IMR-90 (cell line): ENCODE measurements at regions of chr12 and their contacts with region 1.

Region 1: GRCh38 chr12:5428332-5429221 is 3.3 kb upstream of the NTF3 start:
- DNase-seq: peak; percentile 75
- ATAC-seq: peak; percentile 18; the same call in 1 of the 2 replicates
- H3K4me3 ChIP-seq: no peak overlapping the region; the same call in 1 of the 2 replicates
- H3K27ac ChIP-seq: no peak overlapping the region
- H3K4me1 ChIP-seq: peaks cover 9% of the 10 kb centered on the region
- H3K27me3 ChIP-seq: no peaks in the 10 kb centered on the region
- CTCF ChIP-seq: peak; percentile 89
- POLR2A ChIP-seq: 0 out of 2 replicates have a peak, but pooled peaks have one; percentile 35
- RAD21 ChIP-seq: peak; percentile 93

Region 2: GRCh38 chr12:4261655-4262054 is 1166.9 kb before region 1 on chr12:
- CTCF ChIA-PET with region 1: no interaction called
- POLR2A ChIA-PET with region 1: no interaction called
- dilution Hi-C with region 1: no loop called
- in situ Hi-C with region 1: no loop called
- intact Hi-C with region 1: no loop called
- DNase-seq: no peak
- ATAC-seq: no peak
- H3K4me3 ChIP-seq: no peak overlapping the region
- H3K27ac ChIP-seq: no peak overlapping the region
- H3K4me1 ChIP-seq: no peaks in the 10 kb centered on the region
- H3K27me3 ChIP-seq: peaks cover 30% of the 10 kb centered on the region
- CTCF ChIP-seq: no peak
- POLR2A ChIP-seq: no peak
- RAD21 ChIP-seq: no peak

Region 3: GRCh38 chr12:5096241-5096935 is 332.2 kb before region 1 on chr12:
- CTCF ChIA-PET with region 1: interaction called, 3 read pairs
- POLR2A ChIA-PET with region 1: no interaction called
- dilution Hi-C with region 1: no loop called
- in situ Hi-C with region 1: no loop called
- intact Hi-C with region 1: loop called (anchors 2 kb)
- DNase-seq: peak; percentile 92
- ATAC-seq: peak; percentile 87
- H3K4me3 ChIP-seq: no peak overlapping the region
- H3K27ac ChIP-seq: peak overlapping the region; percentile 8; the same call in 1 of the 2 replicates
- H3K4me1 ChIP-seq: peaks cover 21% of the 10 kb centered on the region
- H3K27me3 ChIP-seq: no peaks in the 10 kb centered on the region
- CTCF ChIP-seq: peak; percentile 53
- POLR2A ChIP-seq: no peak
- RAD21 ChIP-seq: peak; percentile 68

Region 4: DNA sequence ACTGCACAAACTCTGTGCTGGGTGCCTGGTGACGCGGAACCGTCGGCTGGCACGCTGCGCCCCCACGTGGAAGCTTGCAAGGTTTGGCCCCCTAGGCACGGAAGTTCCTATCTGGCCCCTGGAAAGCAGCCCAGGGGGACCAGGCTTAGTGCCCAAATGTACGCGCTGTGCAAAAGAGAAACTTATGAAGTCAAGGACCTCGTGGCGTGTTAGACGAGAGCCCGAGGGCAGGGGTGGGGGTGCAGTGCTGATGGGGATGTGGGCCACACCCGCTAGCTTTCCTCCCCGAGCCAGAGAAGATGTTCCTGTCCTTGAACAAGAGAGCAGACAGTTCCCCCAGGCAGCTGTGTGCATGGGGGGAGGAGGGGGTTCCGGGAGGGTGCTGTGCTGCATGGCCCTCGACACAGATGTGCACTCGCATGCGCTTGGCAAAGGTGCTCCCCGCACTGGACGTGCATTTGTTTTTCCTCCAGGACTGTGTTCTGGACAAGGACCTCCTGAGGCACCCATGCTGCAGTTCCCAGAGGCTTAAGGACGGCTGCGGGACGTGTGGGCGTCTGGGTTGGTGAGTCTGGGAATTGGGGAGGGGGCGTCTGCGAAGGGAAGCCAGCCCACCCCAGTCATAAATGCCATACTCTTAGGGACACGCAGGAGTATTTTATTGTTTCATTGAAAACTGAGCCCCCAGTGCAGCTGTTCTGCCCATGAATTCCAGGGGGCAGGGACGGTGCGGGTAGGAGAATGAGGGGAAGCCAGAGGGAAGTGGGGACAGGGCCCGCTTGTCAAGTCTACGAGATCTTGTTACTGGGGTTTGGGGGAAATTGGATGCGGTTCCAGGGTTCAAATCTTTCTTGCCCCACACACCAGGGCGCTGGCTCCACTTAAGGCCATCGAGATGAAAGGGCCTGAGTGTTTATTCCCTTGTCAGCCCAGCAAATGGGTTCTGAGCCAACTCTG is 83.3 kb after region 1 on chr12:
- CTCF ChIA-PET with region 1: interaction called, 5 read pairs
- POLR2A ChIA-PET with region 1: no interaction called
- dilution Hi-C with region 1: no loop called
- in situ Hi-C with region 1: no loop called
- intact Hi-C with region 1: loop called (anchors 1 kb)
- DNase-seq: peak; percentile 44
- ATAC-seq: peak; percentile 79
- H3K4me3 ChIP-seq: no peak overlapping the region
- H3K27ac ChIP-seq: no peak overlapping the region
- H3K4me1 ChIP-seq: peaks cover 5% of the 10 kb centered on the region
- H3K27me3 ChIP-seq: no peaks in the 10 kb centered on the region
- CTCF ChIP-seq: peak; percentile 72
- POLR2A ChIP-seq: no peak
- RAD21 ChIP-seq: peak; percentile 79

Region 5: GRCh38 chr12:5745265-5745888 is 316.8 kb after region 1 on chr12:
- CTCF ChIA-PET with region 1: no interaction called
- POLR2A ChIA-PET with region 1: no interaction called
- dilution Hi-C with region 1: no loop called
- in situ Hi-C with region 1: no loop called
- intact Hi-C with region 1: loop called (anchors 2 kb)
- DNase-seq: peak; percentile 58
- ATAC-seq: peak; percentile 96
- H3K4me3 ChIP-seq: no peak overlapping the region
- H3K27ac ChIP-seq: no peak overlapping the region
- H3K4me1 ChIP-seq: no peaks in the 10 kb centered on the region
- H3K27me3 ChIP-seq: peaks cover 23% of the 10 kb centered on the region
- CTCF ChIP-seq: peak; percentile 67
- POLR2A ChIP-seq: no peak
- RAD21 ChIP-seq: peak; percentile 58

Region 6: DNA sequence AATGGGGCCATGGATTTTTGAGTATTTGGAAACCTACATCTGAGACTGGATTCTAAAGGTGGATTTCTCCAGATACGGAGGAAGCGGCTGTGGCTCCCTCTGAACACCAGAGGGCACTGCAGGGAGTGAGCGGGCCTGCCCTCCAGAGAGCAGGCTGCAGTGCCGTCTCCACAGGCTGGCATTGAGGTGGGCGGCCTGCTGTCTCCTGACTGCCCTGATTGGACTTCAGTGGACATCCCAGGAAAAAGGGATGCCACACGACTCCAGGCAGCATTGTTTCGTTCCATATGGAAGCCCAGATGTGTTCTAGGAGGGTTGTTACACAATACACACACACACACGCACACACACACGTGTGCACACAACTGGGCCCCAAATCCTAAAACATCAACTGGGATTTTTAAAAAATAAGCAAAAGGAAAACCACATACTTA is 537.4 kb after region 1 on chr12:
- CTCF ChIA-PET with region 1: no interaction called
- POLR2A ChIA-PET with region 1: no interaction called
- dilution Hi-C with region 1: no loop called
- in situ Hi-C with region 1: no loop called
- intact Hi-C with region 1: loop called (anchors 5 kb)
- DNase-seq: peak; percentile 34
- ATAC-seq: peak; percentile 99
- H3K4me3 ChIP-seq: no peak overlapping the region
- H3K27ac ChIP-seq: no peak overlapping the region
- H3K4me1 ChIP-seq: no peaks in the 10 kb centered on the region
- H3K27me3 ChIP-seq: peaks cover 34% of the 10 kb centered on the region
- CTCF ChIP-seq: peak; percentile 73
- POLR2A ChIP-seq: no peak
- RAD21 ChIP-seq: peak; percentile 55